Endothelial cell of umbilical vein (primary cell): ENCODE measurements at regions of chr17 and their contacts with region 1.

Region 1: DNA sequence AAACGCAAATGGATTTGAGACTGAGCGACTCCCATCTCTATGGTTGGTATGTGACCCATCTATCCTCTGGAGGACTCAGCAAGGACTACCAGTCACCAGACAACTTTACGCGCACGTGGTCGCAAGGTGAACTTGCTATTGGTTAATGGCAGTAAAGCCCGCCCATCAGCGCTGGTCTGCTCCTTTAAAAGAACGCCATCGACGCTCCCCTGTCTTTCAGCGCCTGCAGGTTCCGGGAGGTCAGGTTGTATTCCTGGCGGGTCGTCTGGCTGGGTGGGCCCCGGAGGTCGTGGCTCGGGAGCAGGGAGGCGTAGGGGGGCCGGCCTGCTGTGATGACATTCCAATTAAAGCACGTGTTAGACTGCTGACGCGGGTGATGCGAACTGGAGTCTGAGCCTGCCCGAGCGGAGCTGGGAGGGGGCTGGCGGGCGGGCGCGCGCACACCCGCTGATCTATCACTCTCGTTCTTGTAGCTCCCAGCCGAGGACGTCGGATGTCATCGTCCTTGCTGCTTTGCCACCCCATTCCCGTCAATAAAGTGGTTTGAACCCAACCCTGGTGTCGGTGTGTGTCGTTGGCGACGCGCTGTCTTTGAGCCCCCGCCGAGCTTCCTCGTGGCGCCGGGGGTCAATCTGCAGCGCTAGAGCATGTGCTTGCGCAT is 15.9 kb upstream of the ERN1 start:
- DNase-seq: peak; percentile 99
- H3K4me3 ChIP-seq: peak overlapping the region; percentile 31 to 72 (median 64)
- H3K27ac ChIP-seq: peak overlapping the region; percentile 63
- H3K4me1 ChIP-seq: peaks cover 21% of the 10 kb centered on the region
- H3K27me3 ChIP-seq: no peaks in the 10 kb centered on the region
- CTCF ChIP-seq: no peak
- POLR2A ChIP-seq: peak; percentile 100

Region 2: DNA sequence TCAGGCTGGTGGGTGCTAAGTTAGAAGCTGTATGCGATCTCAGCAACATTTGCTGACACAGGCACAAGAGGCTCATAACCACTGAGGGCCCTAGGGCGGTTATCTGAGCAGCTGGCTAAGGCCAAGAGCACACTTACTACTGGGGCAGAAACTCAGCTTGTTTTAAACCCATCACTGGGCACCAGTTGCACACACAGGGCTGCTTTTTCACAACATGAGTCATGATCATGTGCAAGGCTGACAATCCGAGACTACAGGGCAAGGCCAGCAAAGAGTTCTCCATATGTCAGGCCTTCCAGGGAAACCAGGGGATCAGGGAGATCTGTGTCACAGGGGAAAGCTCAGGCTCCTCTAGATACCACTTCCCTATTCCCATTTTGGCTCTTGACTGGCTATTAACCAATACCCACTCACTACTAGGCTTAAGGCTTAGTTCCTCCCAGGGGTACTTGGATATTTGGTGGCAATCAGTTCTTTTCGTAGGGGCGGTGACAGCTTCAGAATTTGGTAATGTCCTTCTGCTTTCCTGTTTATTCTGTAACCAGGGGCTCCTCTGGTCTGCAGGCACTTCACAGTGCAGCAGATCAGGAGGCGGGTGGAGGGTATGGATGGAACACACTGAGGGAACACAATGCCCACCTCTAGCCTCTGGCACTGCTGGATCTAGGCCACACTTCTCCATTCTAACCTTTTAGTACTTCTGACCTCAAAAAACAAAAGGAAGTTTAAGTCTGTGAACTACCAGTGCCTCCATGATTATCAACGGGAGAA is 29.0 kb after region 1 on chr17:
- CTCF ChIA-PET with region 1: interaction called, 23 read pairs
- POLR2A ChIA-PET with region 1: interaction called, 13 read pairs
- dilution Hi-C with region 1: no loop called
- intact Hi-C with region 1: loop called (anchors 1 kb)
- DNase-seq: peak; percentile 67
- H3K4me3 ChIP-seq: no peak overlapping the region
- H3K27ac ChIP-seq: peak overlapping the region; percentile 19
- H3K4me1 ChIP-seq: peaks cover 40% of the 10 kb centered on the region
- H3K27me3 ChIP-seq: no peaks in the 10 kb centered on the region
- CTCF ChIP-seq: no peak
- POLR2A ChIP-seq: no peak

Region 3: GRCh38 chr17:64216338-64217248 is 70.7 kb after region 1 on chr17:
- CTCF ChIA-PET with region 1: interaction called, 3 read pairs
- POLR2A ChIA-PET with region 1: no interaction called
- dilution Hi-C with region 1: no loop called
- intact Hi-C with region 1: loop called (anchors 2 kb)
- DNase-seq: peak; percentile 75
- H3K4me3 ChIP-seq: no peak overlapping the region
- H3K27ac ChIP-seq: peak overlapping the region; percentile 74
- H3K4me1 ChIP-seq: peaks cover 28% of the 10 kb centered on the region
- H3K27me3 ChIP-seq: no peaks in the 10 kb centered on the region
- CTCF ChIP-seq: peak in 1 of 2 donors; percentile 24
- POLR2A ChIP-seq: no peak

Region 4: GRCh38 chr17:64262417-64263260 is 116.8 kb after region 1 on chr17 and contains the start of gene TEX2:
- CTCF ChIA-PET with region 1: no interaction called
- POLR2A ChIA-PET with region 1: interaction called, 5 read pairs
- dilution Hi-C with region 1: no loop called
- intact Hi-C with region 1: loop called (anchors 1 kb)
- DNase-seq: peak; percentile 42
- H3K4me3 ChIP-seq: peak within 1 kb of the TSS; percentile 52 to 68 (median 59)
- H3K27ac ChIP-seq: peak within 1 kb of the TSS; percentile 40
- H3K4me1 ChIP-seq: peaks cover 14% of the 10 kb centered on the region
- H3K27me3 ChIP-seq: peaks cover 5 to 7% of the 10 kb centered on the region in 2 experiments
- CTCF ChIP-seq: no peak
- POLR2A ChIP-seq: peak; percentile 54
- total RNA-seq, gene TEX2: 21.7 and 25.8 TPM in 2 replicates

Region 5: DNA sequence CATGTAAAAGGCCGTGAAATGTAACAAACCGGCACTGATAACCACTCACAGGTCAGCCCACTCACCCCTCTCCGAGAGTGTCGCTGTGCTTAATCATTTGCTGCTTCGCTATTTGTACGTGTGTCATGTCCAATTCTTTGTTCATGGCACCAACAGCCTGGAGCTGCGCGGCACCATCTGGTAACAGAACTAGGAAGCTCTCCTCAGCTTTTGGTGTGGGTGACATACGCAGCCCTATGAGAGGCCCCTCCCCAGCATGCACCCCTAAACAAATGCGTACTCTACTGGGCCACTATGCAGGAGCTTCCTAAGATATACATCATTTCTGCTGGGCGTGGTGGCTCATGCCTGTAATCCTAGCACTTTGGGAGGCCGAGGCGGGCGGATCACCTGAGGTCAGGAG is 247.1 kb after region 1 on chr17:
- CTCF ChIA-PET with region 1: no interaction called
- POLR2A ChIA-PET with region 1: interaction called, 4 read pairs
- dilution Hi-C with region 1: no loop called
- intact Hi-C with region 1: loop called (anchors 5 kb)
- DNase-seq: no peak
- H3K4me3 ChIP-seq: no peak overlapping the region
- H3K27ac ChIP-seq: no peak overlapping the region
- H3K4me1 ChIP-seq: peaks cover 16% of the 10 kb centered on the region
- H3K27me3 ChIP-seq: no peaks in the 10 kb centered on the region
- CTCF ChIP-seq: no peak
- POLR2A ChIP-seq: no peak

Region 6: DNA sequence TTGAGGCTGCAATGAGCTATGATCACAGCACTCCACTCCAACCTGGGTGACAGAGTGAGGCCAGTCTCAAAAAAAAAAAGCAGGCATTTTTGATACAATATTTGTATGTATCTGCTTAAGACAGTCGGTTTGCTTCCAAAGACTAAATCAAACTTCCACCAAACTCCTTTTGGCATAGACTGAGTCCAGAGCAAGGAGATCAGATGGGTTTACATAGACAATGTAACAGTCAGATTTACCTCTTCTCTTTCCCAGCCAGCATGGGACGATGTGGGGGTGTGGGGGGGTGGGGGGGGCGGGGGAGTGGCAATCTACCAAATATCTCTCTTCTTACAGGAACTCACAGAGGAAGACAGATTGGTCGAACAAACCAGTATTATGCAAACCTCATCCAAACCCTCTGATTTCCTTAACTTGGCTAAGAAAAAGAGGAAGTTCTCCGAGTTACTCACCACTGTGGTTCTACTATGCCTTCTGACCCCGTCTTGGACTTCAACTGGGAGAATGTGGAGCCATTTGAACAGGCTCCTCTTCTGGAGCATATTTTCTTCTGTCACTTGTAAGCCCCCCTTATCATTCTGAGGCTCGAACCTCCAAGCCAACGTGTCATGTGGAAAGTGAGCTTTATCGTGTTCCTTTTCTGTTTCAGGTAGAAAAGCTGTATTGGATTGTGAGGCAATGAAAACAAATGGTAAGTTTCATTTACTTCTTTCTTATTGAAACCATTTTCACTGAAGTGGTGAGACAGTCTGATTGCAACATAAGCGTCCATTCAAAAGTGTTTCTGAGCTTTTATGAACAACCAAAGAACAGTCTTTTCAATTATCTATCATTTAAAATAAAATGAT is 303.0 kb after region 1 on chr17 and contains the start of gene MILR1:
- CTCF ChIA-PET with region 1: no interaction called
- POLR2A ChIA-PET with region 1: no interaction called
- dilution Hi-C with region 1: no loop called
- intact Hi-C with region 1: no loop called
- DNase-seq: peak; percentile 92
- H3K4me3 ChIP-seq: peak within 1 kb of the TSS in 2 of 3 experiments; percentile 19 to 46
- H3K27ac ChIP-seq: peak within 1 kb of the TSS; percentile 50
- H3K4me1 ChIP-seq: peaks cover 12% of the 10 kb centered on the region
- H3K27me3 ChIP-seq: no peaks in the 10 kb centered on the region
- CTCF ChIP-seq: no peak
- POLR2A ChIP-seq: peak; percentile 39
- total RNA-seq, gene MILR1: 1.2 and 1.6 TPM in 2 replicates

Region 7: DNA sequence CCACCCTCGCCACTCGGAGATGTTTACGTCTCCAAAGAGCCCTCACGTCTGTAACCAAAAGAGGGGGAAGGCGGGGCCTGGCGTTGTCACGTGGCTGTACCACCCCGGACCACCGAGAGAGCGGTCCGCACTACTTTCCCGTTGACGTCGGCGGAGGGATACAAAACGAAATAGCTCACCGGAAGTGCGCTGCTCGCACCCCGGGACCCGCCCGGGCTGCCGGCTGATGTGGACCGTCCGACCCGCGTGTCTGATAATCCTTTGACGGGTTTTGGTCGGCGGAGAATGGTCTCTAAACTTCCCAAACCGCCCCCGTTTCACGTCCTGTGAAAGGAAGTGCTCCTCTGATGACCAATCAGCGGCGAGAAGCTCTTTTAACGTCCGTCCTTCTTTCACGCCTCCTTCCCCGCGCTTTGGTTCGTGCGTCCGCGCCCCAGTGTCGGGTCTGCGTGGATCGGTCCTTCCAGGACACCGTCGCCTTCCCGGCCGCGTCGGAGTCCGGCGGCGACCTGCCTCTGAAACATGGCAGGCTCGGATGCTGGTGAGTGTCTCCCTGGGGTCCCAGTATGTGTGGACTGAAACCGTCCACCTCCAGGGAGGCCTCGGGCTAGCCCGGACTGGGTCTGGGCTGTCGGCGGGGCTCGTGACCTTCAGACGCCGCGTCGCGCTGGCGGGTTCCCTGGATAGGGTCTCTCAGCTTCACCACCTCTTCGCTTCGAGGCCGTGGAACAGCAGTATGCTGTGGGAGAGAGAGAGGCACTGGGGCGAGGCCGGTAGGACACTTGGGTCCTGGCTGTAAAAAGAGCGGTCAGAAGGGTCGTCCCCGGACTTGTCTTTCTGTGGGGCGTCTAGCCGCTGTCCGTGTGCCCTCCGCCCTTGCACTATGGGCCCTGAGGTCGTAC is 360.9 kb after region 1 on chr17 and contains the start of gene CEP95:
- CTCF ChIA-PET with region 1: no interaction called
- POLR2A ChIA-PET with region 1: no interaction called
- dilution Hi-C with region 1: no loop called
- intact Hi-C with region 1: no loop called
- DNase-seq: peak; percentile 96
- H3K4me3 ChIP-seq: peak within 1 kb of the TSS; percentile 65 to 97 (median 95)
- H3K27ac ChIP-seq: peak within 1 kb of the TSS; percentile 98
- H3K4me1 ChIP-seq: peaks cover 34% of the 10 kb centered on the region
- H3K27me3 ChIP-seq: no peaks in the 10 kb centered on the region
- CTCF ChIP-seq: no peak
- POLR2A ChIP-seq: peak; percentile 65
- total RNA-seq, gene CEP95: 35.5 and 42.6 TPM in 2 replicates